Naive thymus-derived CD4-positive, alpha-beta T cell (primary cell): ENCODE measurements at regions of chr4 and their contacts with region 1.

Region 1: GRCh38 chr4:112616984-112617383 is 19.7 kb downstream of the ZGRF1 start:
- DNase-seq: no peak
- ATAC-seq: no peak
- H3K4me3 ChIP-seq: no peak overlapping the region
- H3K4me3 Mint-ChIP-seq: no peak overlapping the region
- H3K27ac ChIP-seq: no peak overlapping the region
- H3K27ac Mint-ChIP-seq: no peak overlapping the region
- H3K4me1 ChIP-seq: no peaks in the 10 kb centered on the region
- H3K4me1 Mint-ChIP-seq: no peaks in the 10 kb centered on the region
- H3K27me3 ChIP-seq: no peaks in the 10 kb centered on the region
- H3K27me3 Mint-ChIP-seq: no peaks in the 10 kb centered on the region

Region 2: GRCh38 chr4:112560084-112560483 is 56.9 kb before region 1 on chr4:
- CTCF ChIA-PET with region 1: no interaction called
- POLR2A ChIA-PET with region 1: no interaction called
- intact Hi-C with region 1: loop called in 1 of 2 experiments (anchors 10 kb)
- DNase-seq: no peak
- ATAC-seq: peak; percentile 34
- H3K4me3 ChIP-seq: no peak overlapping the region
- H3K4me3 Mint-ChIP-seq: no peak overlapping the region
- H3K27ac ChIP-seq: no peak overlapping the region
- H3K27ac Mint-ChIP-seq: no peak overlapping the region
- H3K4me1 ChIP-seq: no peaks in the 10 kb centered on the region
- H3K4me1 Mint-ChIP-seq: peaks cover 0 to 8% (median 0%) of the 10 kb centered on the region in 7 donors
- H3K27me3 ChIP-seq: no peaks in the 10 kb centered on the region
- H3K27me3 Mint-ChIP-seq: no peaks in the 10 kb centered on the region